Tibial artery (tissue), 4 donors: ENCODE measurements at regions of chr10 and their contacts with region 1.

Region 1: DNA sequence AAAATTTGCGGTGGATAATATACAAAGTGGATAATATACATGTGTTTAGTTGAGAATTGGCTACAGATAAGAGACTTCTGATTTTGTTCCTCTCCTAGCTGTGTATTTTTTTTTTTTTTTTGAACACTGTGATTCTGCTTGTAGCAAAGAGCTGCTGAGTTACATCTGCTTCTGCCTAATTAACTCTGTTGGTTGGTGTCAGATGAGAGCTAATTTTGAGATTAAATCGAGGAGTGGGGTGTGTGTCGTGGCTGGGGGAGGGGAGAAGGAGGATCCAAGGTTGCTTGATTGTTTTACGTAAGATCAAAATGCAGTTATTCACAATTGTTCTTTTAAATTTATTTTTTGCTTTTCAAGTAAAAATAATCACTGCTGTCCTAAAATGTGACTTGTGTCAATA is 11.3 kb downstream of the KAT6B start:
- DNase-seq: no peak
- H3K4me3 ChIP-seq: no peak overlapping the region
- H3K27ac ChIP-seq: no peak overlapping the region
- H3K4me1 ChIP-seq: peaks cover 0 to 60% (median 33%) of the 10 kb centered on the region in 4 donors
- H3K27me3 ChIP-seq: no peaks in the 10 kb centered on the region
- CTCF ChIP-seq: no peak

Region 2: GRCh38 chr10:74282151-74282850 is 555.4 kb before region 1 on chr10:
- intact Hi-C with region 1: loop called (anchors 10 kb)
- DNase-seq: no peak
- H3K4me3 ChIP-seq: no peak overlapping the region
- H3K27ac ChIP-seq: no peak overlapping the region
- H3K4me1 ChIP-seq: no peaks in the 10 kb centered on the region
- H3K27me3 ChIP-seq: no peaks in the 10 kb centered on the region
- CTCF ChIP-seq: no peak